Calu3 (cell line): ENCODE measurements at regions of chr12 and their contacts with region 1.

Region 1: DNA sequence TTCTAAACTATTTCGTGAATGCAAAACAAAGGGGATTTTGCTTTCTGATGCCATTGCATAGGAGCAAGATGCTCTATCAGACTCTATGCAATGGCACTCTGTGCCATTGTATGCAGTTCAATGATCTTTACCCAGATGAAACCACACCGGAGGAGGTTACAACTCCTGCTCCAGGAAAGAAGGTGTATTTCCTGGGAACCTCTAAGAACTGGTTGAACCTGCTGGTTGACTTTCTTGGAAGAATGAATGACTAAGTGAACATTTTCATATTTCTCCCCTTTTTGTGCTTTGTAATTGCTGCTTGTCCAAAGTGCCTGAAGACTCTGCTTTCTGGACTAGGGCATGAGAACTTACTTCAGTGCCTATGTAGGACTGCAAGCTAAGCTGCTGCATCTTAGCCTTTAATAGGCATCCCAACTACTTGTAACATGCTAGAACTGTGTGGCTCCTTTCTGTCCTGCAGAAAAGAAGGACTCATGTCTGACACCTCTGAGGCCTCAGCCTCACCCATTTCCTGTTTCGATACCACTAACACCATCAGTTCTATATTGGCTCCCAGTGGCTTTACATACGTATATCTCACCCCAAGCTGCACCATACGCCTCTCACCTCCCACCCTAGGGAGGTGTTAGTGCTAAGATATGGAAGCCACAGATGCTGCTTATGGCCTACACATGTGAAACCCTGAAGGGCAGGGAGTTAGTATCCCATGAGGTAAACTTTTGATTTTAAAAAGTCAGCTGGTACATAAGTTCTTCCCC is 193.5 kb upstream of the CNOT2 start:
- DNase-seq: peak; percentile 73
- H3K4me3 Mint-ChIP-seq: peak overlapping the region; percentile 29
- H3K27ac Mint-ChIP-seq: peak overlapping the region; percentile 81
- H3K4me1 Mint-ChIP-seq: peaks cover 75% of the 10 kb centered on the region
- H3K27me3 Mint-ChIP-seq: no peaks in the 10 kb centered on the region
- CTCF ChIP-seq: peak; percentile 18

Region 2: DNA sequence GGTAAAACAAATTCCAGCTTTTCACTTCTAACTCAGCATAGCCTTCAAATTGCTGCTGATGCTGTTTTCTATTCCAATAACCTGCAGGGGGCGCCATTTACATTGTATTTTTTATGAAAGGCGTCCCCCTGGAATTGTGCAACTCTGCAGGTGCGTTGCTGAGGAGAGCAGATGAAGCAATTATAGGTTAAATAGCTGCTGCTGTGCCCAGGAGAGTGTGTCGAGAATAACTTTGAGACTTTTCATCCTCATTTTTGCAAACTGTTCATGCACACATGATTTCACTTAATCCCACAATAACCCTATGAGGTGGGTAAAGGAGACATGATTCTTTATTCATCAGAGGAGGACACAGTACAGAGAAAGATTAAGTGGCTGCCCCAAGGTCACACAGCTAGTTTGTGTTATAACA is 149.1 kb before region 1 on chr12:
- CTCF ChIA-PET with region 1: no interaction called
- intact Hi-C with region 1: loop called (anchors 2 kb)
- DNase-seq: peak; percentile 85
- H3K4me3 Mint-ChIP-seq: no peak overlapping the region
- H3K27ac Mint-ChIP-seq: no peak overlapping the region
- H3K4me1 Mint-ChIP-seq: no peaks in the 10 kb centered on the region
- H3K27me3 Mint-ChIP-seq: no peaks in the 10 kb centered on the region
- CTCF ChIP-seq: peak; percentile 92

Region 3: GRCh38 chr12:69985656-69986055 is 64.1 kb before region 1 on chr12:
- CTCF ChIA-PET with region 1: no interaction called
- intact Hi-C with region 1: loop called (anchors 2 kb)
- DNase-seq: peak; percentile 73
- H3K4me3 Mint-ChIP-seq: no peak overlapping the region
- H3K27ac Mint-ChIP-seq: no peak overlapping the region
- H3K4me1 Mint-ChIP-seq: no peaks in the 10 kb centered on the region
- H3K27me3 Mint-ChIP-seq: no peaks in the 10 kb centered on the region
- CTCF ChIP-seq: peak; percentile 70

Region 4: DNA sequence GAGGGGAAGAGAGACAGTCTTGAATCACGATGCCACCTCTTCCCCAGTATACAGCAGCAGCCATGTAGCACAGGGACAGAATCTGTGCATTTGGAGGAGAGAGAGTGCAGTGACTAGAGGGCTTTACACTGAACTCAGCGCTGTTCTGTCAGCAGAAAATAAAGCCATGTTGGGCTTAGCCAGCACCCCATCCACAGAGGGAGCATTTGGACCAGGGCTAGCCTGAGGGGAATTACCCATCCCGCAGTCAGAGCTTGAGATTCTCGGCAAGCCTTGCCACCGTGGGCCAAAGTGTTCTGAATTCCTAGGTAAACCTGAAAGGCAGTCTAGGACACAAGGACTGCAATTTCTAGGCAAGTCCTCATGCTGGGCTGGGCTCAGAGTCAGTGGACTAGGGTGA is 73.0 kb after region 1 on chr12:
- CTCF ChIA-PET with region 1: no interaction called
- intact Hi-C with region 1: loop called (anchors 2 kb)
- DNase-seq: no peak
- H3K4me3 Mint-ChIP-seq: no peak overlapping the region
- H3K27ac Mint-ChIP-seq: no peak overlapping the region
- H3K4me1 Mint-ChIP-seq: peaks cover 11% of the 10 kb centered on the region
- H3K27me3 Mint-ChIP-seq: no peaks in the 10 kb centered on the region
- CTCF ChIP-seq: no peak

Region 5: GRCh38 chr12:70242695-70243509 is 193.1 kb after region 1 on chr12 and contains the start of gene CNOT2:
- CTCF ChIA-PET with region 1: no interaction called
- intact Hi-C with region 1: loop called (anchors 5 kb)
- DNase-seq: peak; percentile 93
- H3K4me3 Mint-ChIP-seq: peak within 1 kb of the TSS; percentile 89
- H3K27ac Mint-ChIP-seq: peak within 1 kb of the TSS; percentile 95
- H3K4me1 Mint-ChIP-seq: peaks cover 41% of the 10 kb centered on the region
- H3K27me3 Mint-ChIP-seq: no peaks in the 10 kb centered on the region
- CTCF ChIP-seq: no peak
- total RNA-seq, gene CNOT2: 117 and 126 TPM in 2 replicates